ENCODE measurements at regions of chr3 and their contacts with region 1.

Region 1: DNA sequence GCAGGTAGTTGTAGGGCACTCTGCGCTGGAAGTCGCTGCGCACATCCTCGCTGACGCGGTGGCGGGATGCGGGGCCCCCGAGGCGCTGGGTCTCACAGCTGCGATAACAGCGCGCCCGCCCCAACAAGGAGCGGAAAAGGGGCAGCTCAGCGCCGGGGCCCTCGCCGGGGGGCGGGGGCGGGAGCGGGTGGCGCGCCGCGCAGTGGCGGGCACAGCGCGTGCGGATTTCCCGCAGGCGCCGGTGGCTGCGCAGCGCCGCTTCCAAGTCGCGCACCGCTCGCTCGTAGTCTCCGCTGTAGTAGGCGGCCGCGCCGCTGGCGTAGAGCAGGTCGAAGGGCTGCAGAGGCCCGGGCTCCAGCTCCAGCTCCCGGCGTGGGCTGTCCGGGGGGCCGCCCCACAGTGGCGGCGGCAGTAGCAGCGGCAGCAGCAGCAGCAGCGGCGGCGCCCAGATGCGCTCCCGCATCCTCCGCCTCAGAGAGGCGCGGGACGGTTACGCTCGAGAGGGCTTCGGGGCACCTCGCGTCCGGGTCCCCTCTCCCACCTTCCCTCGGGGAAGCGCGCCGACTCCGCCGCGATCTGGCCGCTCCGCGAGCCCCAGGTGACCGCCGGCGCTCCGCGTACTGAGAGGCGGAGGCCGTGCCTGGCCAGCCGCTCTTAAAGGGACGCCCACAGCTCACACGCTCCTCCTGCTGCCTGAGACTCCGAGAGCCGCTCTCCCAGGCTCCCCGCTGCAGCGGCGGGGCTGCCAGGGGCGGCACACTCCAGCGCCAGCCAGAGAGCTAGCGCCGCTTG is at the start of gene P3H2:
- DNase-seq: peak; percentile 86 to 91
- H3K4me3 ChIP-seq: peak within 1 kb of the TSS; percentile 82
- H3K4me3 Mint-ChIP-seq: peak within 1 kb of the TSS; percentile 79
- H3K27ac Mint-ChIP-seq: peak within 1 kb of the TSS; percentile 65
- H3K4me1 ChIP-seq: peaks cover 62% of the 10 kb centered on the region
- H3K4me1 Mint-ChIP-seq: peaks cover 37% of the 10 kb centered on the region
- H3K27me3 ChIP-seq: no peaks in the 10 kb centered on the region
- H3K27me3 Mint-ChIP-seq: no peaks in the 10 kb centered on the region
- CTCF ChIP-seq: peak in 1 of 2 experiments; percentile 61
- total RNA-seq, gene P3H2: 37.9 and 55.8 TPM in 2 replicates

Region 2: GRCh38 chr3:189967254-189967865 is 153.1 kb before region 1 on chr3:
- CTCF ChIA-PET with region 1: interaction called, 13 read pairs
- POLR2A ChIA-PET with region 1: no interaction called
- intact Hi-C with region 1: loop called (anchors 1 kb)
- DNase-seq: peak in 1 of 2 experiments; percentile 64
- H3K4me3 ChIP-seq: no peak overlapping the region
- H3K4me3 Mint-ChIP-seq: no peak overlapping the region
- H3K27ac Mint-ChIP-seq: no peak overlapping the region
- H3K4me1 ChIP-seq: no peaks in the 10 kb centered on the region
- H3K4me1 Mint-ChIP-seq: no peaks in the 10 kb centered on the region
- H3K27me3 ChIP-seq: no peaks in the 10 kb centered on the region
- H3K27me3 Mint-ChIP-seq: no peaks in the 10 kb centered on the region
- CTCF ChIP-seq: peak; percentile 75 to 80

Region 3: DNA sequence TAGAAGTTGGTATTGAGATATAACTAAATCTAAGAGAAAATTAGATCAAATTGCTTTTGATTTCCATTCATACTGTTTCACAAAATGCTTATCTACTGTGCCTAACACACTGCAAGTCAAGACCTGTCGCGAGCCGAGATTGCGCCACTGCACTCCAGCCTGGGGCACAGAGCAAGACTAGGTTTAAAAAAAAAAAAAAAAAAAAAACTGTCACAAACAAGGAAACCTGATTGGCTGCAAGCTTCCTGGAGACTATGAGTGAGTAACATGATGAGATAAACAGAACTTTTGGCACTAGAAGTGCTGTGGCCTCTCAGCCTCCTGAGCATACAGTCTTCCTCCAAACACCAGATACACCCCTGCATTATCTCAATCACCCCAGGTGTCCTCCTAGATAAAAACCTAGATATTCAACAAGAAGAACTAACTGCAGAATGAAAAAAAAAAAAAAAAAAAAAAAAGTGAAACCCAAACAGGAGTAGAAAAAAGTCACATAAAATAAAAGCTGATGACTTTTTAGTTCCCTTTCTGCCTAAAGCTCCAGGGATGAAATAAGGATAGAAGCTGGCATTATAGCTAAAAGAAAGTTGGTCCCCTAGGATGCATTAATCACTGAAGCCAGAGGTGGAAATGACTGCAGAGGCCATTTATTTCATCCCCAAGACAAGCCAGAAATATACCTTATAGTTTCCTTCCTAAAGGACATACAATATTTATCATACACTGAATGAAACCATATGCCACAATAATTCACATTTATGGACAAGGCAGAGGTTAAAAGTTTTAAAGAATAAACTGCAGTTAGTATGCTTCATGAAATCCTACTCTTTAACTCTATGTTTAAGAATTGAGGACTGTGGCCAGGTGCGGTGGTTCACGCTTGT is 82.2 kb before region 1 on chr3:
- CTCF ChIA-PET with region 1: interaction called, 4 read pairs
- POLR2A ChIA-PET with region 1: no interaction called
- intact Hi-C with region 1: loop called (anchors 2 kb)
- DNase-seq: peak; percentile 76 to 79
- H3K4me3 ChIP-seq: no peak overlapping the region
- H3K4me3 Mint-ChIP-seq: peak overlapping the region; percentile 31
- H3K27ac Mint-ChIP-seq: peak overlapping the region; percentile 46
- H3K4me1 ChIP-seq: peaks cover 9% of the 10 kb centered on the region
- H3K4me1 Mint-ChIP-seq: peaks cover 18% of the 10 kb centered on the region
- H3K27me3 ChIP-seq: no peaks in the 10 kb centered on the region
- H3K27me3 Mint-ChIP-seq: no peaks in the 10 kb centered on the region
- CTCF ChIP-seq: no peak

Region 4: DNA sequence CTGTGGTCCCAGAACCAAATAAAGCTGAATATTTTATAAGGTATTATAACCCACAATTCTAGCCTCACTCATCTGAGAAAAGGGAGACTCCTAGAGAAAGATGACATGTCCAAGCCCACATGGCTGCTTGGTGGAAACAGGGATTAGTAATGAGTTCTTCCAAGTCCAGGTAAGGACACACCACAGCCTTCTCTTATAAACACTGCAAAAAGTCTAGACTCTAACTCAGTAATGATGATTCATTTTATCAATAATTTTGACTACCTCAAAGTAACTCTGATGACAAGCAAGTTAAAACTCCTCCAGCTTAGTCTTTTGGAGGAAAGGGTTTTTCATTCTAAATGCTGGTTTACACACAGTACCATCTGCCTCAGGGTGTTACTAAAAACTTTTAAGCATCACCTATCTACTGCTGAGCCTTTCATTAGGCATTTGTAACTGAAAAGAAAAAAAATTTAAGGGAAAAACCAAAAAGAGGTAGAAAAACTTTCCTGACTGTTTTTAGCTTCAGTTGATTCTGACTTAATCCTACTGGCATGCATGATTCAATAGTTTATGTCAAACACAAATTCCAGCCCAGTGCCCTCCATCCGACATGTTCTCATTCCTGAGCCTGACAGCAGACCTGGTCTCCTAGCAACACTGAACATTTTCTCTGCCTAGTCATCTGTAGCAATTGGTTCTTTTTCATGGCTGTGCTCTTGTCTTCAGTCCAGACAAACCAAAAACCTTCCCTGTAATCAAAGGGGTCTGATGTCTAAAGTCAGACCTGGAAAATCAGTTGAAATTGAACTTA is 43.7 kb before region 1 on chr3:
- CTCF ChIA-PET with region 1: no interaction called
- POLR2A ChIA-PET with region 1: no interaction called
- intact Hi-C with region 1: loop called (anchors 5 kb)
- DNase-seq: peak in 1 of 2 experiments; percentile 47
- H3K4me3 ChIP-seq: no peak overlapping the region
- H3K4me3 Mint-ChIP-seq: no peak overlapping the region
- H3K27ac Mint-ChIP-seq: peak overlapping the region; percentile 36
- H3K4me1 ChIP-seq: peaks cover 11% of the 10 kb centered on the region
- H3K4me1 Mint-ChIP-seq: peaks cover 9% of the 10 kb centered on the region
- H3K27me3 ChIP-seq: no peaks in the 10 kb centered on the region
- H3K27me3 Mint-ChIP-seq: no peaks in the 10 kb centered on the region
- CTCF ChIP-seq: no peak

Region 5: DNA sequence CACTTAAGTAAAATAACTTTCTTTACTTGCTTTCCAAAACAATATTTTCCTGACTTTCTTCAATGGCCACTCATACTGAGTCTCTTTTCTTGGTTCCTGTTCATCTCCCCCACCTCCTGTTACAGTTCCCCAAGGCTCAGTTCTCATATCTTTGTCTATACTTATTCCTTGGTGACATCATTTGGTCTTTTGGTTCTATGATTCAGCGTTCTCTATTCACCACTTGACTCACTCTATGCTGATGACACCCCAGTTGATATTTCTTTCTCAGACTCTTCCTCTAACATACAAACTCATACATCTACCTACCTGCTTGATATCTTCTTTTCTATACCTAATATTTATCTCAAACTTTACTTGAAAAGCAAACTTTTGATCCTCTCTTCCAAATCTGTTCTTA is 85.3 kb after region 1 on chr3:
- CTCF ChIA-PET with region 1: no interaction called
- POLR2A ChIA-PET with region 1: no interaction called
- intact Hi-C with region 1: loop called (anchors 1 kb)
- DNase-seq: no peak
- H3K4me3 ChIP-seq: no peak overlapping the region
- H3K4me3 Mint-ChIP-seq: no peak overlapping the region
- H3K27ac Mint-ChIP-seq: no peak overlapping the region
- H3K4me1 ChIP-seq: peaks cover 4% of the 10 kb centered on the region; the same call in 1 of the 2 replicates
- H3K4me1 Mint-ChIP-seq: peaks cover 6% of the 10 kb centered on the region
- H3K27me3 ChIP-seq: no peaks in the 10 kb centered on the region
- H3K27me3 Mint-ChIP-seq: no peaks in the 10 kb centered on the region
- CTCF ChIP-seq: no peak

Region 6: GRCh38 chr3:190321789-190322603 is 201.5 kb after region 1 on chr3 and contains the start of gene CLDN1:
- CTCF ChIA-PET with region 1: no interaction called
- POLR2A ChIA-PET with region 1: no interaction called
- intact Hi-C with region 1: loop called (anchors 5 kb)
- DNase-seq: peak; percentile 83 to 92
- H3K4me3 ChIP-seq: peak within 1 kb of the TSS; percentile 66
- H3K4me3 Mint-ChIP-seq: peak within 1 kb of the TSS; percentile 81
- H3K27ac Mint-ChIP-seq: peak within 1 kb of the TSS; percentile 56
- H3K4me1 ChIP-seq: peaks cover 9% of the 10 kb centered on the region
- H3K4me1 Mint-ChIP-seq: peaks cover 29% of the 10 kb centered on the region
- H3K27me3 ChIP-seq: no peaks in the 10 kb centered on the region
- H3K27me3 Mint-ChIP-seq: no peaks in the 10 kb centered on the region
- CTCF ChIP-seq: peak; percentile 92 to 96
- total RNA-seq, gene CLDN1: 38.9 and 39.3 TPM in 2 replicates